OCI-LY7 (cell line): ENCODE measurements at regions of chrX and their contacts with region 1.

Region 1: GRCh38 chrX:283115-283845 is 2.1 kb downstream of the PLCXD1 start:
- DNase-seq: peak; percentile 98
- H3K4me3 ChIP-seq: peak overlapping the region; percentile 90
- H3K27ac ChIP-seq: peak overlapping the region; percentile 94
- H3K4me1 ChIP-seq: peaks cover 22% of the 10 kb centered on the region
- CTCF ChIP-seq: no peak

Region 2: GRCh38 chrX:318739-319578 is 35.7 kb after region 1 on chrX and contains the start of gene GTPBP6:
- CTCF ChIA-PET with region 1: no interaction called
- POLR2A ChIA-PET with region 1: no interaction called
- intact Hi-C with region 1: loop called (anchors 1 kb)
- DNase-seq: peak; percentile 100
- H3K4me3 ChIP-seq: peak within 1 kb of the TSS; percentile 93
- H3K27ac ChIP-seq: peak within 1 kb of the TSS; percentile 76
- H3K4me1 ChIP-seq: peaks cover 19% of the 10 kb centered on the region
- CTCF ChIP-seq: no peak
- total RNA-seq, gene GTPBP6: 36.3 and 40.4 TPM in 2 replicates

Region 3: GRCh38 chrX:489820-490219 is 206.5 kb after region 1 on chrX:
- CTCF ChIA-PET with region 1: no interaction called
- POLR2A ChIA-PET with region 1: no interaction called
- intact Hi-C with region 1: no loop called
- DNase-seq: no peak
- H3K4me3 ChIP-seq: no peak overlapping the region
- H3K27ac ChIP-seq: no peak overlapping the region
- H3K4me1 ChIP-seq: no peaks in the 10 kb centered on the region
- CTCF ChIP-seq: no peak

Region 4: DNA sequence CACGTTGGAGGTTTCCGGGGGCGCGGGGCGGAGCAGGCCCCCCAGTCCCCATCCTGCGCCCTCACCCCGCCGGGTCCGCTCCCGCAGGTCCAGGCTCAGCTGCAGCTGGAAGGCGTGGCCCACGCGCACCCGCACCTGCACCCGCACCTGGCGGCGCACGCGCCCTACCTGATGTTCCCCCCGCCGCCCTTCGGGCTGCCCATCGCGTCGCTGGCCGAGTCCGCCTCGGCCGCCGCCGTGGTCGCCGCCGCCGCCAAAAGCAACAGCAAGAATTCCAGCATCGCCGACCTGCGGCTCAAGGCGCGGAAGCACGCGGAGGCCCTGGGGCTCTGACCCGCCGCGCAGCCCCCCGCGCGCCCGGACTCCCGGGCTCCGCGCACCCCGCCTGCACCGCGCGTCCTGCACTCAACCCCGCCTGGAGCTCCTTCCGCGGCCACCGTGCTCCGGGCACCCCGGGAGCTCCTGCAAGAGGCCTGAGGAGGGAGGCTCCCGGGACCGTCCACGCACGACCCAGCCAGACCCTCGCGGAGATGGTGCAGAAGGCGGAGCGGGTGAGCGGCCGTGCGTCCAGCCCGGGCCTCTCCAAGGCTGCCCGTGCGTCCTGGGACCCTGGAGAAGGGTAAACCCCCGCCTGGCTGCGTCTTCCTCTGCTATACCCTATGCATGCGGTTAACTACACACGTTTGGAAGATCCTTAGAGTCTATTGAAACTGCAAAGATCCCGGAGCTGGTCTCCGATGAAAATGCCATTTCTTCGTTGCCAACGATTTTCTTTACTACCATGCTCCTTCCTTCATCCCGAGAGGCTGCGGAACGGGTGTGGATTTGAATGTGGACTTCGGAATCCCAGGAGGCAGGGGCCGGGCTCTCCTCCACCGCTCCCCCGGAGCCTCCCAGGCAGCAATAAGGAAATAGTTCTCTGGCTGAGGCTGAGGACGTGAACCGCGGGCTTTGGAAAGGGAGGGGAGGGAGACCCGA is 361.3 kb after region 1 on chrX:
- CTCF ChIA-PET with region 1: no interaction called
- POLR2A ChIA-PET with region 1: no interaction called
- intact Hi-C with region 1: no loop called
- DNase-seq: no peak
- H3K4me3 ChIP-seq: no peak overlapping the region
- H3K27ac ChIP-seq: no peak overlapping the region
- H3K4me1 ChIP-seq: no peaks in the 10 kb centered on the region
- CTCF ChIP-seq: no peak